CD8-positive, alpha-beta memory T cell (primary cell): ENCODE measurements at regions of chr17 and their contacts with region 1.

Region 1: GRCh38 chr17:59106463-59107305 is at the start of gene TRIM37:
- DNase-seq: peak; percentile 97 to 99 (median 99)
- H3K4me3 ChIP-seq: peak within 1 kb of the TSS; percentile 69
- H3K4me3 Mint-ChIP-seq: peak within 1 kb of the TSS; percentile 86 to 96 (median 95)
- H3K27ac ChIP-seq: peak within 1 kb of the TSS; percentile 90
- H3K27ac Mint-ChIP-seq: peak within 1 kb of the TSS; percentile 86 to 97 (median 91)
- H3K4me1 ChIP-seq: peaks cover 27% of the 10 kb centered on the region
- H3K4me1 Mint-ChIP-seq: peaks cover 35 to 49% (median 42%) of the 10 kb centered on the region in 3 donors
- H3K27me3 ChIP-seq: no peaks in the 10 kb centered on the region
- H3K27me3 Mint-ChIP-seq: peaks cover 0 to 4% of the 10 kb centered on the region in 2 donors
- total RNA-seq, gene TRIM37: 27.7 to 30.6 TPM

Region 2: GRCh38 chr17:59010026-59010425 is 96.7 kb before region 1 on chr17:
- CTCF ChIA-PET with region 1: no interaction called
- POLR2A ChIA-PET with region 1: no interaction called
- DNase-seq: no peak
- H3K4me3 ChIP-seq: no peak overlapping the region
- H3K4me3 Mint-ChIP-seq: no peak overlapping the region
- H3K27ac ChIP-seq: no peak overlapping the region
- H3K27ac Mint-ChIP-seq: no peak overlapping the region
- H3K4me1 ChIP-seq: no peaks in the 10 kb centered on the region
- H3K4me1 Mint-ChIP-seq: no peaks in the 10 kb centered on the region
- H3K27me3 ChIP-seq: no peaks in the 10 kb centered on the region
- H3K27me3 Mint-ChIP-seq: no peaks in the 10 kb centered on the region

Region 3: DNA sequence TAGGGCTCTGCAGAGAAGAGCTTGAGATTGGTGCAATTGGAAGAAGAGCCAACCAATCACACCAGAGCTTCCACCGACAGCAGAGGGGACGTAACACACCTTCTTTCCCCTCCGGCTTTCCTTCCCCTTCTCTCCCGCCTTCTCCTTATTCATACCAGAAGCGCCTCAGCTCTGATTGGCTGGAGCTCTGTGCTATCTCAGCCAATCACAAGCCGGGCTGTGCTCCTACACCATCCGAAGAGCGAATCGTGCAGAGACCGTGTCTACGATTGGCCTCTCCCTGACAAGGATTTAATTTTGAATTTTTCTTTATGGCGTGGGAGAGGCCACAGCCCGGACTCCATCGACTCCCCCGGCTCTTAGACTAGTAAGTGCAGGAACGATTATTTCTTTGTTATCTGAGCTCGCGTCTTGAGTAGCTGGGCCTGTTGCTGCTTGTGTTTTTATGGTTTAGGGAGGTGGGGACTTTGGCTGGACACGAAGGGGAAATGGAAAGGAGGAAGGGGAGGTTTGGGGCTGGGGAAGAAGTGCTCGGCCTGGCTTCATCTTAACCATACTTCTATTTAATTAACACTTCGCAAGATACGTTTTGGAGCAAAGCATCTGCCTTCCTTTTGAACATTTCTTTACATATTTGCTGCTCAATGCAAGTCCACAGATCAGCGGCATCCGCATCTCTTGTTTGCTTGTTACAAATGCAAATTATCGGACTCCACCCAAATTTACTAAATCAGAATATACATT is 48.9 kb after region 1 on chr17 and contains the start of gene PRR11:
- CTCF ChIA-PET with region 1: interaction called, 12 read pairs
- POLR2A ChIA-PET with region 1: interaction called, 22 read pairs
- DNase-seq: peak in 4 of 5 donors; percentile 86 to 98 (median 94)
- H3K4me3 ChIP-seq: peak within 1 kb of the TSS; percentile 91
- H3K4me3 Mint-ChIP-seq: no peak within 1 kb of the TSS
- H3K27ac ChIP-seq: peak within 1 kb of the TSS; percentile 82
- H3K27ac Mint-ChIP-seq: peak within 1 kb of the TSS in 4 of 8 donors; percentile 21 to 66 (median 52)
- H3K4me1 ChIP-seq: peaks cover 8% of the 10 kb centered on the region
- H3K4me1 Mint-ChIP-seq: peaks cover 32 to 71% (median 59%) of the 10 kb centered on the region in 3 donors
- H3K27me3 ChIP-seq: no peaks in the 10 kb centered on the region
- H3K27me3 Mint-ChIP-seq: no peaks in the 10 kb centered on the region
- total RNA-seq, gene PRR11: 35.6 to 36.3 TPM